Posterior vena cava (tissue), 2 donors: ENCODE measurements at regions of chr4 and their contacts with region 1.

Region 1: DNA sequence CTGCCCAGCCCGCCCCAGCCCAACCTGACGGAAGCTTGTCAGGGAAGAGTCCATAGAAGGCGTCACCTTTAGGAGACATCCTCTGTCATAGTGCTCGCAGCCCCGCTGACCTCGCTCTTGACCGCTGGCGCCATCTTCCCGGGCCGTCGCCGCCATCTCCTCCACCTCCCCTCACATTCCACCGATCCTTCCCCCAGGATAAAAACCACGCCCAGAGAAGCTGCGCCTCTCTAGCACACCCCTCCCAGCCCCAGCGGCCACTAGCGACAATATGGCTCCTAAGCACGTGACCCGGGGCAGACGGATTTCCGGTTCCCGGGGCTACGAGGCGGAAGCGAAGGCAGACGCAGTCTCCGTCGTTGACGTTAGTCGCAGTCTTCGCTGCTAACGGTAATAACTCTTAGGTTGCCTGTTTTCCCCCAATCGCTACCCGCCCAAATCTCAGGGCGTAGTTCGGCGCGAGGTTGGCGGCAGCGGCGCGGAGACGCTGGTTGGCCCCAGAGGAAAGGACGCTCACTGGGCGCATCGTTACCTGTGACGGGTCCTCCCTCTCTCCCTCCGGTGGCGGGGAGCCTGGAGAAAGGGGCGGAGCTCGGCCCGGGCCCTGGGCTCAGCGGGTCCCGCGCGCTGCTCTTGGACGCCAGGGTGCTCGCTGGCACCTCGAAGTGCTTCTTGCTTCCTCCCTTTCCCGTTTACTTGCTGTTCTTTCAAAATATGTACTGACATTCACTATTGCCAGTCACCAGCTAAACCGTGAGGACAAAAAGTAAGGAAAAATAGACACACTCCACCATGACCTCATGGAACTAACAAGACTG is at the starts of genes RCHY1 and THAP6:
- DNase-seq: peak; percentile 99
- total RNA-seq, gene RCHY1: 30.6 to 31.9 TPM
- total RNA-seq, gene THAP6: 15.7 to 19.9 TPM

Region 2: DNA sequence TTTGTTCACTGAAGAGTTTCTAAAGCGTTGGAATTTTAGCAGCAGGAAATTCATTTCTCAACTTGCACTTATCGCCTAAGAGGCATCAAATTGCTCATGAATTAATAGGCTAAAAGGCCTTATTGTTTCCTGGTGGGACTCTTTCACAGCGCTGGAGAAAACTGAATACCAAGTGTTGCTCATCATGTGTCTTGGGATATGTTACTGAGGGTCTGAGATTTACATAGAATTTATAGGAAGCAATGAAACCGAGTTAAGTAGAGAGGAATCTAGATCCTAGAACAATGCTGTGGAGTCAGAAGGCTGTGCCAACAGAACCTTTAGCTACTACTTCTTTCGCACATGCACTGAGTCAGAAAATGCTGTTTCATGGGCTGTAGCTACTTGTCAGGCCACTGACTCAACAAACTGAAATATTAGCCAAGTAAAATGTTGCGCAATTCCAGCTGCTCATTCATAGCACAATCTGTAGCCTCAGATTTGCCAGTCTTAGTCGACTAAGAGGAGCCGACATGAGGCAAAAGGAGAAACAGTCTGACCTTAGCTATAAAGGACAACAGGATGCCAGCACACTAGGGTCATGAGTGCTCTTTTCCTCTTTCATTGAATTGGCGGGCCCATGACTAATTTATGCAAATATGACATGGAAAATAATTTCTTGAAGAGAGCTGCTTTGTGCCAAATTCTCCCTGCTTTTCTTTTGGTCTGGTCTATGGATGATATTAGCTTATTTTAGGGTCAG is 1809.9 kb before region 1 on chr4:
- intact Hi-C with region 1: loop called in 1 of 2 experiments (anchors 10 kb)
- DNase-seq: no peak

Region 3: GRCh38 chr4:75289914-75290582 is 224.3 kb before region 1 on chr4:
- intact Hi-C with region 1: no loop called
- DNase-seq: no peak